H1 (cell line): ENCODE measurements at regions of chr4 and their contacts with region 1.

Region 1: DNA sequence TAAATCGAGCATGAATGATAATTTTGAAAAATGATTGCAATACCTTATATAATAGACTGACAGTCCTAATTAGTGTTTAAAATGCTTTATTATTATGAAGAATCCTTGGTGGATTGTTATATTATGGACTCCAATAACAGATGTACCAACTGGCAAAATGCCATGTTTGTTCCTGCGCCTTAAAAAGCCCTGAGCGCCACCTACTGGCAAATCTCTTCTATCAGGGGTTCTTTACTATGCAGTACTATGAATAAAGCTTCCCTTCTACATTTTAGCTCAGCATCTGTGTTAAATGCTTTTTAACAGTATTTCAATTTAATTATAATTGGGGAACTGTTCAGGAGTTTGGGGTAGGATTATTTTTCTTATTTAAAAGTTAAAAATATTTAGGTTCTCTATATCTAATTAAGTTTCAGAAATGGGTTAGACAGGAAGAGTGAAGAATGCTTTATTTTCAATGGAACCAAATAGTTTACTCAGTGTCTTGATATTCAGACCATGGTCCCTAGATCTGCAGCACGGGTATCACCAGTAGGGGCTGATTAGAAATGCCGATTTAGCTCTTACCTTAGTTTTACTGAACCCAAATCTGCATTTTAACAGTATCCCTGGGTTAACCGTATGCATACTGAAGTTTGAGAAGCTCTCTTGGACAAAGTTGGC is 20.1 kb downstream of the CFAP97 start:
- DNase-seq: peak in 1 of 2 experiments; percentile 70
- H3K4me3 ChIP-seq: no peak overlapping the region
- H3K27ac ChIP-seq: no peak overlapping the region
- H3K4me1 ChIP-seq: peaks cover 4 to 10% (median 6%) of the 10 kb centered on the region in 4 experiments; a peak in 5 of 7 replicates
- H3K27me3 ChIP-seq: no peaks in the 10 kb centered on the region
- CTCF ChIP-seq: peak in 2 of 3 experiments; percentile 58 to 67; a peak in 3 of 4 replicates
- EP300 ChIP-seq: no peak
- POLR2A ChIP-seq: no peak
- RAD21 ChIP-seq: peak; percentile 73 to 78

Region 2: DNA sequence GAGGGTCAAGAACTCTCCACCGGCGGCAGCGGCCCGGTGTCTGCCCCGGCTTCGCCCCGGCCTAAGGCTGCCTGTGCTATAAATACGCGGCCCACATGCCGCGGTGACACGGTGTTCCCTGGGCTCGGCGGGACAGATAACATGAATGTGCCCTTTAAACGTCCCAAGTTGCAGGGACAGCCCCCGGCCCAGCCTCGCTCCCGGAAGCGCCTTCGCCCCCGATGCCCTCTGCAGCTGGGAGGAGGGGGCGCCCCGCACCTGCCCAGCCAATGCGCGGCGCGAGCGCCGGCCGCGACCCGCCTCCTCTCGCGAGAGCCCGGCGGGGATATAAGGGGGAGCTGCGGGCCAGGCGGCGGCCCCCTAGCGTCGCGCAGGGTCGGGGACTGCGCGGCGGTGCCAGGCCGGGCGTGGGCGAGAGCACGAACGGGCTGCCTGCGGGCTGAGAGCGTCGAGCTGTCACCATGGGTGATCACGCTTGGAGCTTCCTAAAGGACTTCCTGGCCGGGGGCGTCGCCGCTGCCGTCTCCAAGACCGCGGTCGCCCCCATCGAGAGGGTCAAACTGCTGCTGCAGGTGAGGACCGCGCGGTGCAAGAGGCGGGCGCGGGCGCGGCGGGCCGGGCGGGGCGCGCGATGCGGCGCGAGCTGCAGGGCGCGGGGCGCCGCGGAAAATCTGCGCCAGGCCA is 40.7 kb before region 1 on chr4 and contains the start of gene SLC25A4:
- CTCF ChIA-PET with region 1: interaction called, 10 read pairs
- POLR2A ChIA-PET with region 1: interaction called, 6 read pairs
- DNase-seq: peak in 1 of 2 experiments; percentile 92
- H3K4me3 ChIP-seq: peak within 1 kb of the TSS; percentile 75 to 99 (median 80)
- H3K27ac ChIP-seq: no peak within 1 kb of the TSS
- H3K4me1 ChIP-seq: peaks cover 0 to 9% (median 6%) of the 10 kb centered on the region in 4 experiments; a peak in 5 of 7 replicates
- H3K27me3 ChIP-seq: no peaks in the 10 kb centered on the region; a peak in 1 of 7 replicates
- CTCF ChIP-seq: peak; percentile 36 to 45 (median 41)
- EP300 ChIP-seq: no peak
- POLR2A ChIP-seq: peak; percentile 93 to 98
- RAD21 ChIP-seq: no peak; a peak in 1 of 4 replicates
- total RNA-seq, gene SLC25A4: 42.0 TPM in 2 replicates

Region 3: GRCh38 chr4:185165605-185166063 is 18.1 kb before region 1 on chr4:
- CTCF ChIA-PET with region 1: interaction called, 21 read pairs
- POLR2A ChIA-PET with region 1: no interaction called
- DNase-seq: no peak
- H3K4me3 ChIP-seq: no peak overlapping the region
- H3K27ac ChIP-seq: no peak overlapping the region
- H3K4me1 ChIP-seq: no peaks in the 10 kb centered on the region
- H3K27me3 ChIP-seq: peaks cover 0 to 1% (median 0%) of the 10 kb centered on the region in 4 experiments; a peak in 1 of 7 replicates
- CTCF ChIP-seq: no peak
- EP300 ChIP-seq: no peak
- POLR2A ChIP-seq: no peak
- RAD21 ChIP-seq: no peak; a peak in 1 of 4 replicates

Region 4: GRCh38 chr4:185171373-185172071 is 12.2 kb before region 1 on chr4:
- CTCF ChIA-PET with region 1: interaction called, 23 read pairs
- POLR2A ChIA-PET with region 1: no interaction called
- DNase-seq: no peak
- H3K4me3 ChIP-seq: no peak overlapping the region
- H3K27ac ChIP-seq: no peak overlapping the region
- H3K4me1 ChIP-seq: peaks cover 0 to 5% (median 0%) of the 10 kb centered on the region in 4 experiments; a peak in 1 of 7 replicates
- H3K27me3 ChIP-seq: no peaks in the 10 kb centered on the region
- CTCF ChIP-seq: no peak
- EP300 ChIP-seq: no peak
- POLR2A ChIP-seq: no peak
- RAD21 ChIP-seq: no peak

Region 5: GRCh38 chr4:185201983-185202962 is 18.5 kb after region 1 on chr4:
- CTCF ChIA-PET with region 1: interaction called, 55 read pairs
- POLR2A ChIA-PET with region 1: interaction called, 5 read pairs
- DNase-seq: no peak
- H3K4me3 ChIP-seq: peak overlapping the region in 1 of 4 experiments; percentile 85; a peak in 2 of 8 replicates
- H3K27ac ChIP-seq: no peak overlapping the region
- H3K4me1 ChIP-seq: peaks cover 0 to 10% (median 6%) of the 10 kb centered on the region in 4 experiments; a peak in 4 of 7 replicates
- H3K27me3 ChIP-seq: no peaks in the 10 kb centered on the region; a peak in 1 of 7 replicates
- CTCF ChIP-seq: no peak
- EP300 ChIP-seq: no peak
- POLR2A ChIP-seq: no peak
- RAD21 ChIP-seq: no peak

Region 6: DNA sequence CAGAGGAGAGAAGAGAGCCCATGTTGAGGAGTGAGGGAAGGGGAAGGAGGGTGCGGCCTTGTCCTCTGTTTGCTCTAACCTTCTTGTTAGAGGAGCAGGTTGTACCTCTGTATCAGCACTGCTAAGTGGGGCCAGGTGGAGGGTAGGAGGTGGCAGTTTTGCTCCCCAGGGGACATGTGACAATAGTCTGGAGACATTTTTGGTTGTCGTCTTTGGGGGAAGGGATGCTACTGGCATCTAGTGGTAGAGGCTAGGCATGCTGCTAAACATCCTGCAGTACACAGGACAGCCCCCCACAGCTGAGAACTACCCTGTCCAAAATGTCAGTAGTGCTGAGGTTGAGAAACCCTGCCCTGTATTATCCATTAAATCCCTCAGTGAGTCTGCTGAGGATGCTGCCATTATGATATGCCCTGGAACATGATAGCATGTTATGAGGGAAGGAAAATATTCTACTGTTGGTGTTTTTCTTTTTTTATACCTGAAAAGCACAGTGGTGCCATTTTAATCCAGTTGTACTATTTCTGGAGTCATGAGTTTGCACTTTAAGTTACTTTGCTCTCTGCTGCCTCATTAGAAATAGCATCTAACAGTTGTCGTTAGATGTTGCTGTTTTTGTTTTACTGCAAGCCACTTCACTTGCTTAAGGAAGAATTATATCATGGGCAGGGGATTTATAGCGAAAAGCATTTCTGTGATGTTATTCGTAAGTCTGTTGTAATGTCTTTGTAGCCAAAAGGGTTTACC is 121.4 kb after region 1 on chr4:
- CTCF ChIA-PET with region 1: interaction called, 10 read pairs
- POLR2A ChIA-PET with region 1: no interaction called
- DNase-seq: peak; percentile 25 to 57
- H3K4me3 ChIP-seq: no peak overlapping the region
- H3K27ac ChIP-seq: no peak overlapping the region; the same call in 1 of the 2 replicates
- H3K4me1 ChIP-seq: peaks cover 12 to 27% (median 20%) of the 10 kb centered on the region in 4 experiments
- H3K27me3 ChIP-seq: no peaks in the 10 kb centered on the region
- CTCF ChIP-seq: peak; percentile 61 to 76 (median 69)
- EP300 ChIP-seq: no peak
- POLR2A ChIP-seq: no peak
- RAD21 ChIP-seq: peak; percentile 82 to 86

Region 7: DNA sequence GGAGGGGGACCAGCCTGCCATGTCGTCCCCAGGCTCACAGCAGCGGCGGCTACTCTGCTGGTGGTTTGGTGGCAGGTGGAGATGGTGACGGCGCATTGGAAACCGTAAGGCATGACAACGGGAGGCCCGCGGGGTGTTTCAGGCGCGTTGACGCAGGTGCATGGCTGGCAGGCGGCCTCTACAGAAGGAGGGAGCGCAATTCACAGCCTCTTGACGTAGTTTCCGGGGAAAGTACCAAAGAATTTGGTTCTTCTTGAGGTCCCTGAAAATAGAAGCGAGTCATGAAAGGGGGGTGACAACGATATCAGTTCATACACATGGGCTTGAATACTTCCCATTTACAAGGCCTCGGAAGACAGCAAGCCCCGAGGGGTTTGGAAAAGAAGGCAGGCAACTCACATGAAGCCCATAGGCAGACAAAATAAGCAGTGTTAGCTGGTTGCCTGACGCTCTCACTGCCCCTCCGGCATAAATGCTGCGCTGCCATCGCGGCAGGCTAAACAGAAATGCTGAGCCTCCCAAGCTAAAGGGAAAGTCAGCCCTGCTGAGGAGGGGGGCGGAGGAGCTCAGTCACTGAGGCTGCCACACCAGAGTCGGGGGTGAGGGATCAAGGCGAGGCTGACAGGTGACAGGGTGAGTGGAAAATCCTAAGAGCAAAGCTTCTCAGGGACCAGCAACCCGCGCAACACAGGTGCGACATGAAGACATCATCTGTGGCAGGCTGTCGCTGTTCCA is 403.8 kb after region 1 on chr4:
- CTCF ChIA-PET with region 1: no interaction called
- POLR2A ChIA-PET with region 1: no interaction called
- DNase-seq: peak in 1 of 2 experiments; percentile 77
- H3K4me3 ChIP-seq: peak overlapping the region in 3 of 4 experiments; percentile 18 to 53 (median 29); a peak in 5 of 8 replicates
- H3K27ac ChIP-seq: peak overlapping the region; percentile 13; the same call in 1 of the 2 replicates
- H3K4me1 ChIP-seq: peaks cover 4 to 18% (median 10%) of the 10 kb centered on the region in 4 experiments
- H3K27me3 ChIP-seq: peaks cover 0 to 3% (median 1%) of the 10 kb centered on the region in 4 experiments; a peak in 2 of 7 replicates
- CTCF ChIP-seq: no peak
- EP300 ChIP-seq: no peak
- POLR2A ChIP-seq: no peak
- RAD21 ChIP-seq: no peak